HepG2 (cell line): ENCODE measurements at regions of chr20 and their contacts with region 1.

Region 1: GRCh38 chr20:56574531-56575142 is 41.6 kb downstream of the FAM209B start:
- DNase-seq: no peak
- ATAC-seq: peak; percentile 7; the same call in 2 of the 3 replicates
- H3K4me3 ChIP-seq: no peak overlapping the region
- H3K27ac ChIP-seq: no peak overlapping the region
- H3K4me1 ChIP-seq: no peaks in the 10 kb centered on the region
- H3K27me3 ChIP-seq: peaks cover 0 to 28% of the 10 kb centered on the region in 2 experiments; a peak in 3 of 5 replicates
- CTCF ChIP-seq: no peak
- EP300 ChIP-seq: no peak
- POLR2A ChIP-seq: no peak
- RAD21 ChIP-seq: no peak

Region 2: GRCh38 chr20:56202493-56203077 is 372.1 kb before region 1 on chr20:
- CTCF ChIA-PET with region 1: interaction called, 4 read pairs
- POLR2A ChIA-PET with region 1: no interaction called
- in situ Hi-C with region 1: no loop called
- intact Hi-C with region 1: loop called (anchors 2 kb)
- DNase-seq: peak; percentile 13
- ATAC-seq: peak; percentile 81
- H3K4me3 ChIP-seq: no peak overlapping the region
- H3K27ac ChIP-seq: no peak overlapping the region
- H3K4me1 ChIP-seq: no peaks in the 10 kb centered on the region
- H3K27me3 ChIP-seq: no peaks in the 10 kb centered on the region
- CTCF ChIP-seq: peak; percentile 66
- EP300 ChIP-seq: no peak
- POLR2A ChIP-seq: no peak
- RAD21 ChIP-seq: no peak

Region 3: DNA sequence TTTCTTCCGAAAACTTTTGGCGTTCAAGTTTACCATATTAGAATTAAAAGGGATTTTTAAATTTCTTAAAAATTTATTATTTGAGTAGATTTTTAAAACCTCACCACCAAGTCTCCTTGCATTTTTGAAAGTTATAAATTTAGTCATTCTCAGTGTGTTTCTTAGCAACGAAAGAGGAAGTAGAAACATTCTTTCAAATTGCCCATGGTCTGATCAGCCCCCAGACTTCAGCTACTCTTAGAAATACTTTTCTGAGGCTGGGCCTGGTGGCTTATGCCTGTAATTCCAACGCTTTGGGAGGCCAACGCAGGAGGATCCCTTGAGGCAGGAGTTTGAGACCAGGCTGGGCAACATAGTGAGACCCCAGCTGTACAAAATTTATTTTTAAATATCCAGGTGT is 121.3 kb before region 1 on chr20:
- CTCF ChIA-PET with region 1: no interaction called
- POLR2A ChIA-PET with region 1: no interaction called
- in situ Hi-C with region 1: no loop called
- intact Hi-C with region 1: no loop called
- DNase-seq: no peak
- ATAC-seq: no peak
- H3K4me3 ChIP-seq: no peak overlapping the region
- H3K27ac ChIP-seq: no peak overlapping the region
- H3K4me1 ChIP-seq: no peaks in the 10 kb centered on the region
- H3K27me3 ChIP-seq: no peaks in the 10 kb centered on the region
- CTCF ChIP-seq: no peak
- EP300 ChIP-seq: no peak
- POLR2A ChIP-seq: no peak
- RAD21 ChIP-seq: no peak

Region 4: GRCh38 chr20:56595746-56596478 is 21.3 kb after region 1 on chr20:
- CTCF ChIA-PET with region 1: no interaction called
- POLR2A ChIA-PET with region 1: no interaction called
- in situ Hi-C with region 1: no loop called
- intact Hi-C with region 1: no loop called
- DNase-seq: no peak
- ATAC-seq: no peak
- H3K4me3 ChIP-seq: no peak overlapping the region
- H3K27ac ChIP-seq: no peak overlapping the region
- H3K4me1 ChIP-seq: no peaks in the 10 kb centered on the region
- H3K27me3 ChIP-seq: peaks cover 0 to 8% of the 10 kb centered on the region in 2 experiments; a peak in 1 of 5 replicates
- CTCF ChIP-seq: no peak
- EP300 ChIP-seq: no peak
- POLR2A ChIP-seq: no peak
- RAD21 ChIP-seq: no peak

Region 5: GRCh38 chr20:56985286-56985685 is 410.6 kb after region 1 on chr20:
- CTCF ChIA-PET with region 1: no interaction called
- POLR2A ChIA-PET with region 1: no interaction called
- in situ Hi-C with region 1: no loop called
- intact Hi-C with region 1: no loop called
- DNase-seq: no peak
- ATAC-seq: no peak
- H3K4me3 ChIP-seq: no peak overlapping the region
- H3K27ac ChIP-seq: no peak overlapping the region
- H3K4me1 ChIP-seq: no peaks in the 10 kb centered on the region
- H3K27me3 ChIP-seq: peaks cover under 1 to 16% of the 10 kb centered on the region in 2 experiments; a peak in 2 of 5 replicates
- CTCF ChIP-seq: no peak
- EP300 ChIP-seq: no peak
- POLR2A ChIP-seq: no peak
- RAD21 ChIP-seq: no peak